ENCODE measurements at regions of chr3 and their contacts with region 1.

Region 1: DNA sequence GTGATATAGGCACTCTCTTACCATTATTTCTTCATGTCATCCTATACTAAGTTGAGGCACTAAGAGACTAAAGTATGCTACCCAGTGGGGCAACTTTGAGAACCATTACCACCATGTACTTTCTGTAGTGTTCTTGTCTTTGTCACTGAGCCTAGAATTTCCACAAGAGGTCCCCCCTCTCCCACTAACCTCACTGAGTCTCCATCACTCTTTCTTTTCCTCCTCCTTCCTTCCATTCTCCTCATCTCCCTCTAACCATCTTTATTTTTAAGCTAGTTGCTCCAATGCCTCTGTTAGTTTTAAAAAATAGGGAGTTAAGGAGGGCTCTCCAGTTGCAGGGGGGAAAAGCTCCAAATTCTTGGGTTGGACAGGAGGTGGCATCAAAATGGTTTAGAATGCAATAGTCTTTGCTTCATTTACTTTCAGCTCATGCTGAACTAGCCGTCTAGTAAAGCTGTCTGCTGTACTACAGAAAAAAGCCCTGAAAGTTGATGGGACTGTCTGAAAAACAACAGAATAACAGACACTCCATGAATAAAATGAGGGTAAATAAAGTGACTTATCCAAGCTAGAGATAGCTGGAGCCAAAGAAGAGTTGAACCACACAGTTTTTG is 85.1 kb upstream of the MYRIP start:
- DNase-seq: no peak
- H3K4me3 ChIP-seq: no peak overlapping the region
- H3K27ac ChIP-seq: no peak overlapping the region
- H3K4me1 ChIP-seq: no peaks in the 10 kb centered on the region
- H3K27me3 ChIP-seq: no peaks in the 10 kb centered on the region
- CTCF ChIP-seq: peak in 7 of 11 experiments; percentile 18 to 68 (median 44)
- POLR2A ChIP-seq: no peak

Region 2: DNA sequence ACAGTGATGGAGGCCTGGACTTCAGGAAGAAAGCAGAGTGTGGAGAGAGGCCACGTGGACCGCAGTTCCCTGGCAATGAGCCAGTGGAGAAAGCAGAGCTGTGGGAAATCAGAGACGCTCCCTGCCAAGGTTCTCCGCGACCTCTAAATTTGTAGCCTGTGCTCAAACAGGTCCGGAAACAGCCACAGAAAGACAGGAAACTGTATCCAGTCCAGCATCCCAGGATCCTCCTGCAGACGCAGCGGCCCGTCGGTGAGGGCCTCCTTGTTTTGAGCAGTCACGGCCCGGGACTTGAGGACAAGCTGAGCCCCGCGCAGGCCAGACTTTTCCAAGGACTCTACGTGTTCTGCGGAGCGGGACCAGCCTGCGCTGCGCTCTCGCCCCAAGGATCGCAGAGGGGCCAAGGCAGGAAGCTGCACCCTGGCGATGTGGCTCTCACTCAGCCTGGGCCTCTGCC is 295.6 kb before region 1 on chr3:
- intact Hi-C with region 1: no loop called
- DNase-seq: no peak
- H3K4me3 ChIP-seq: no peak overlapping the region
- H3K27ac ChIP-seq: peak overlapping the region in 2 of 8 donors; percentile 38 to 42
- H3K4me1 ChIP-seq: peaks cover 0 to 17% (median 0%) of the 10 kb centered on the region in 6 donors
- H3K27me3 ChIP-seq: no peaks in the 10 kb centered on the region
- CTCF ChIP-seq: no peak
- POLR2A ChIP-seq: no peak

Region 3: DNA sequence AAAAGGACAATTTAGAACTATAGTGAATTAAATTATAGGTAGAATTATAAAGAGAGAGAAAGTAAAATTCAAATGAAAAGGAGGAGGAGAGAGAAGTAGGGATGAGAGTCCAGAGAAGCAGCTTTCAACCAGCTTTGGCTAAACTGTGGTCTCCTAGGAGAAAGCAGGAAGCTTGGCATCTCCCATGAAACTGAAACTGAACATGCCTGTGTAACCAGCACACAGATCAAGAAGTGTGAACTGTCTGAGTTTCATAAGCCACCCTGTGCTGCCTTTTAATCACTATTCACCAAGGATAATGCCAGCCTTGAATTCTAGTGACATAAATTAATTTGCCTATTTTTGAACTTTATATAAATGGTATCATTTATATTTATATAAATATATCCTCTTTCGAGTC is 213.5 kb after region 1 on chr3:
- intact Hi-C with region 1: no loop called
- DNase-seq: no peak
- H3K4me3 ChIP-seq: no peak overlapping the region
- H3K27ac ChIP-seq: peak overlapping the region in 3 of 8 donors; percentile 6 to 48 (median 18)
- H3K4me1 ChIP-seq: peaks cover 0 to 31% (median 12%) of the 10 kb centered on the region in 6 donors
- H3K27me3 ChIP-seq: no peaks in the 10 kb centered on the region
- CTCF ChIP-seq: no peak
- POLR2A ChIP-seq: no peak

Region 4: DNA sequence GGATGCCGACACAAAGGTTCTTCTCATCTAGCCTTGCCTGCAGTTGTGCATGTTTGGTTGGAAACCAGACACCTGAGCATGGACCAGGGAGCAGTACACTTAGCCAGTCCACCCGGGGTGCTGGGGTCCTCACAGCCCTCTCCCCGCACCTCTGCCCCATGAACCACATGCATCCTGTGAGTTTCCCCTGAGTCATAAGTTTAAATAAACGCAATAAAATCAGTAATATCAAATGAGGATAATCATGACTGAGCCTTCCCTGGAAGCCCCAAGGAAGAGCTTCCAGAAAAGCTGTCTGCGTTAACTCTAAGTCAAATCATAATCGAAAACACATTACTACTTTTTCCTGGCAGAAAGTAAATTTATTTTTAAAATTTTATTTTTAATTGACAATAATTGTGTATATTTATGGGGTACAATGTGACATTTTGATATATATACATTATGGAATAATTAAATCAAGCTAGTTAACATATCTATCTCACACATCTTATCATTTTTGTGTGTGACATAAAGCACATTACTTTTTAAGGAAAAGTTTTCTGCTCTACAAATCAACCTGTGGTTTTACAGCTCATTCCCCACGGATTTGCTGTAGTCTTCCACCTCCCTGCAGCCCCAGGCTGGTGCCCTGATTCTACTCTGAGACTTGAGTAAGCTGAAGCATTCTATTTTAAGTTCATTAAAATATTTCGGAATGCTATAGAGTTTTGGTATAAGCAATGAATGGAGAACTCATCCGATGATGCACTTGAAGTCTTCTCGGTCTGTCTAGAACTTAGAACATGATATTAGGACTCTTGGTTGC is 419.1 kb after region 1 on chr3:
- intact Hi-C with region 1: no loop called
- DNase-seq: no peak
- H3K4me3 ChIP-seq: no peak overlapping the region
- H3K27ac ChIP-seq: no peak overlapping the region
- H3K4me1 ChIP-seq: no peaks in the 10 kb centered on the region
- H3K27me3 ChIP-seq: no peaks in the 10 kb centered on the region
- CTCF ChIP-seq: no peak
- POLR2A ChIP-seq: no peak

Region 5: DNA sequence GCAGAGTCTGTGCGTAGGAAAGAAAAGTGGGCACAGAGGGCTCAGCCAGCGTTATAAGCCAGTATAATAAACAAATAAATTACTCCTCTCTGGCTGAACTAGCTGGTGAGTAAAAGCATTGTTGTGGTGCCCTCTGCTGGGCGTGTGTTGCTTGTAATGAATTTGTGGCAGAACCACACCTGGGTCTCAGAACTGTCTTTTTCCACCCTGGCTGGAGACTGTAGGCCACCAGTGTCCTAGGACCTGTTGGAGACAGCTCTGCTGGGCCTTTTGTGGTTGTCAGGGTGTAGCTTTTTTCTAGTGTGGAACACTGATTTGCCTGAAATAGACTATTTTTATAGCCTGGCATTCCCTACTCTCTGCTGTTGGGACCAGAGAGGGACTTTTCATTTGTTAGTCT is 454.7 kb after region 1 on chr3:
- intact Hi-C with region 1: loop called (anchors 5 kb)
- DNase-seq: peak; percentile 78
- H3K4me3 ChIP-seq: no peak overlapping the region
- H3K27ac ChIP-seq: no peak overlapping the region
- H3K4me1 ChIP-seq: peaks cover 0 to 3% (median 0%) of the 10 kb centered on the region in 6 donors
- H3K27me3 ChIP-seq: no peaks in the 10 kb centered on the region
- CTCF ChIP-seq: peak in 10 of 11 experiments; percentile 18 to 71 (median 59)
- POLR2A ChIP-seq: no peak